Activated CD4-positive, alpha-beta T cell treated with anti-CD3 and anti-CD28 coated beads for 36 hours (primary cell): ENCODE measurements at regions of chr14 and their contacts with region 1.

Region 1: DNA sequence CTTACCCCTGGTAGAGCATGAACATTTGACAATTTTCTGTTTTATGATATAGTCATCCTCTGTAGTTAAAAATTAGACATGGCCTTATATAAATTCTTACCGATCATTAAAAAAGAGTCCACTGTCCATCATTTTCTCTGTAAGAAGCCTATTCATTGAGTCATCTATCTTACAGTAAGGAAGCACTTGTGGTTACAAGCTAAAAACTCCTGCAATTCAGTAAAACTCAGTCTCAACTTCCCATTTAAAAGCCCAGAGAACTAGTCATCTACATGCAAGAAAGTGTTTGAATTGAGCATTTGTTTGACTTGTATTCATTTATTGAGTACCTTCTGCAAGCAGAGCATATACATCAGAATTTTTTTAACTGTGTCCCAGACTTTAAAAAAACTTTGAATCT is 63.3 kb downstream of the GTF2A1 start:
- DNase-seq: no peak
- ATAC-seq: no peak
- H3K4me3 Mint-ChIP-seq: no peak overlapping the region
- H3K27ac Mint-ChIP-seq: no peak overlapping the region
- H3K4me1 Mint-ChIP-seq: peaks cover 12% of the 10 kb centered on the region
- H3K27me3 Mint-ChIP-seq: peaks cover 5% of the 10 kb centered on the region

Region 2: DNA sequence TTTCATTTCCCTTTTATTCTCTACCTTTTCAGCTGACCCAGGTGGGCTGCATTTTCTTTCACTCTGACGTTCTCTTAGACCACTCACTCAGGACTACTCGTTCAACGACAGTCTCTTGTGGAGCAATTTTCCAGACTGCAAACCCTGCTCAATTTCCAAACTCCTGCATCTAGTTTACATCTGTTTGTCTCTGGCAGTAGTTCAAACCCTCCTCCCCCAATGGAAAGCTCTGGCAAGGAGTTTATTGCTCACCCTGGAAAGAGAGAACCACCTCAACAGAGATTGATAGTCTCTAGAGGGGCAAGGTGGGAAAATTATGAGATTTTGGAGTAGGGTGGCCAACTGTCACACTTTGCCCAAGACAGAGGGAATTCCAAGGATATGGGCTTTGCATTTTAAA is 71.8 kb before region 1 on chr14:
- CTCF ChIA-PET with region 1: no interaction called
- POLR2A ChIA-PET with region 1: no interaction called
- intact Hi-C with region 1: loop called in 1 of 2 experiments (anchors 10 kb)
- DNase-seq: no peak
- ATAC-seq: no peak
- H3K4me3 Mint-ChIP-seq: no peak overlapping the region
- H3K27ac Mint-ChIP-seq: no peak overlapping the region
- H3K4me1 Mint-ChIP-seq: no peaks in the 10 kb centered on the region
- H3K27me3 Mint-ChIP-seq: no peaks in the 10 kb centered on the region

Region 3: GRCh38 chr14:81122326-81122725 is 35.1 kb before region 1 on chr14:
- CTCF ChIA-PET with region 1: no interaction called
- POLR2A ChIA-PET with region 1: no interaction called
- intact Hi-C with region 1: no loop called
- DNase-seq: no peak
- ATAC-seq: peak; percentile 60
- H3K4me3 Mint-ChIP-seq: no peak overlapping the region
- H3K27ac Mint-ChIP-seq: no peak overlapping the region
- H3K4me1 Mint-ChIP-seq: peaks cover 4% of the 10 kb centered on the region
- H3K27me3 Mint-ChIP-seq: no peaks in the 10 kb centered on the region

Region 4: DNA sequence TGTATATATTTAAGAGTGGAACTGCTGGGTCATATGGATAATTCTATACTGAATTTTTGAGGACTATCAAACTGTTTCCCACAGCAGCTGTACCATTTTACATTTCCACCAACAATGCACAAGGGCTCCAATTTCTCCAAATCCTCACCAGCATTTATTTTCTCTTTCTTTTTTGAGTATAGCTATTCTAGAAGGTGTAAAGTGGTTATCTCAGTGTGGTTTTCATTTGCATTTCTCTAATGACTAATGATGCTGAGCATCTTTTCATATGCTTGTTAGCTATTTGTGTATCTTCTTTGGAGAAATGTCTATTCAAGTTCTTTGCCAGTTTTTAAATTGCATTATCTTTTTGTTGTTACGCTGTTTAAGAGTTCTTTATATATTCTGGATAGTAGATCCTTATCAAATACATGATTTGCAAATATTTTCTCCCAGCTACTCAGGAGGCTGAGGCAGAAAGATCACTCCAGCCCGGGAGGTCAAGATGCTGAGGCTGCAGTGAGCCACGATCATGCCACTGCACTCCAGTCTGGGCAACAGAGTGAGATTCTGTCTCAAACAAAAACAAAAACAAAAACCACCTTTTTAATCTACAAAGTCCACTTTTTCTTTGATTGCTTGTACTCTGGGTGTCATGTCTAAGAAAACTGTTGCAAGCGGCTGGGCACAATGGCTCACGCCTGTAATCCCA is 30.5 kb after region 1 on chr14:
- CTCF ChIA-PET with region 1: no interaction called
- POLR2A ChIA-PET with region 1: no interaction called
- intact Hi-C with region 1: no loop called
- DNase-seq: no peak
- ATAC-seq: peak; percentile 52
- H3K4me3 Mint-ChIP-seq: no peak overlapping the region
- H3K27ac Mint-ChIP-seq: no peak overlapping the region
- H3K4me1 Mint-ChIP-seq: peaks cover 45% of the 10 kb centered on the region
- H3K27me3 Mint-ChIP-seq: no peaks in the 10 kb centered on the region